A549 (cell line): ENCODE measurements at regions of chr11 and their contacts with region 1.

Region 1: DNA sequence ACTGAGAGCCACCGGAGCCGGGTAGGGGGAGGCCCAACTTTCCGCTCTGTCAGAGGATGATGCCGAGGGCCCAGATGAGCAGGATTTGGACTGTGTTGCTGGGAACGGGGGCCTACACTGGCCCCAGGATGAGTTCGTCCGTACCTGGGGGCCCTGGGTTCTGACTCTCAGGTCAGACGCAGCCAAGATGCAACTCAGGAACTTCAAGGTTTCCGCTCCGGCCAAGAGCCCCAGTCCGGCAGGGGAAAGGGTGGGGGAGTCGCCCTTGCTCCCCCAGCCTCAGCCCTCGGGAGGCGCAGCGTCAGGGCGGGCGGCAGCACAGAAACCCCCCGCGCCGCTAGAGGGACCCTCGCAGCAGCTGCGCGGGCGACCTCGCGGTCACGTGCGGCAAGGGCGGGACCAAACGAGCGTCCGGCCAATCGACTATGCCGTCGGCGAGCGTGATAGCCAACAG is 241 bp upstream of the ARL2 start:
- DNase-seq: peak in 1 of 2 experiments; percentile 94
- ATAC-seq: peak; percentile 90 to 92
- H3K4me3 ChIP-seq: peak overlapping the region; percentile 65
- H3K27ac ChIP-seq: peak overlapping the region; percentile 95 to 97
- H3K4me1 ChIP-seq: peaks cover 26% of the 10 kb centered on the region
- CTCF ChIP-seq: no peak; the same call in 1 of the 3 replicates
- EP300 ChIP-seq: no peak
- POLR2A ChIP-seq: peak; percentile 41
- RAD21 ChIP-seq: no peak; a peak in 2 of 5 replicates

Region 2: DNA sequence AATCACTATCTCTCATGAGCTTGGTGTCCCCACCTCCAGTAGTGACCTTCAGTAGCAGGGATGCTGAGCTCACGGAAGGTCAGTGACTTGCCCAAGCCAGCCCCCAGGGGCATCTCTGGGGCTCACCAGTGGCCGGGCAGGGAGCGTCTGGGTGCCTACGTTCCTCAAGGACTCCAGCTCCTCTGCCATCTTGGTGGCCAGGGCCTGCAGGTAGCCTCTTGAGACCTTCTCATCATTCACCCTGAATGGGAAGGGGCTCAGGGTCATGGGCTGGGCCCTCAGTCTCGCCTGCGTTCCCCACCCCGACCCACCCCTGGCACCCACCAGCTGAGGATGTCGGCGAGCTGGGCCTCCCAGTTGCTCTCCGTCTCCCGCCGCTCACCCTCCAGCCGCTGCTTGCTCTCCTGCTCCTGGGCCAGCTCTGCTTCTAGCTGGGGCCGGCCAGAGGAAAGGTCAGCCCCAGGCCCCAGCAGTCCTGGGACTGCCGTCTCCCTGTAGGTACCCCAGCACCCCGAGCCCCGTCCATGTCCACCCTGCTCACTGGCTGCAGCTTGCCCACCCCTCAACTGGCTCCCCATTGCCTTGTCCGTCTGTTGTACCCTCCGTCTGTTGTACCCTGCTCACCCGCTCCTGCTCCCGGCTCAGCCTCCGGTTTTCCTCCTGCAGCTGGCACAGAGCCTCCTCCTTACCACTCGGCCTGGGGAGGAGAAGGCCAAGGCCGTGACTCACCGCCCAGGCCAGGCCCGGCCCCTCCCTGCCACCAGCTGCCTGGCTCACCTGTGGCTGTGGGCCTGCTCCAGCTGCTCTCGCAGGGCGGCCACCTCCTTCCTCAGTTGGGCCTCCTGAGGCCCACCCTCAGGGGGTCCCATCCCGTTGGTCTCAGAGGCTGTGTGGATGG is 178.7 kb before region 1 on chr11:
- CTCF ChIA-PET with region 1: interaction called, 14 read pairs
- POLR2A ChIA-PET with region 1: interaction called, 3 read pairs
- DNase-seq: peak; percentile 53 to 58
- ATAC-seq: peak; percentile 62 to 83
- H3K4me3 ChIP-seq: no peak overlapping the region
- H3K27ac ChIP-seq: peak overlapping the region; percentile 60 to 68; a peak in 5 of 6 replicates
- H3K4me1 ChIP-seq: peaks cover 17% of the 10 kb centered on the region
- CTCF ChIP-seq: no peak
- EP300 ChIP-seq: no peak
- POLR2A ChIP-seq: no peak
- RAD21 ChIP-seq: no peak

Region 3: GRCh38 chr11:64878494-64879243 is 135.1 kb before region 1 on chr11 and contains the start of gene EHD1:
- CTCF ChIA-PET with region 1: interaction called, 10 read pairs
- POLR2A ChIA-PET with region 1: no interaction called
- DNase-seq: peak; percentile 97 to 98
- ATAC-seq: peak; percentile 77 to 89
- H3K4me3 ChIP-seq: peak within 1 kb of the TSS; percentile 90
- H3K27ac ChIP-seq: peak within 1 kb of the TSS; percentile 92 to 97
- H3K4me1 ChIP-seq: peaks cover 24% of the 10 kb centered on the region
- CTCF ChIP-seq: peak; percentile 69
- EP300 ChIP-seq: no peak
- POLR2A ChIP-seq: peak; percentile 95
- RAD21 ChIP-seq: peak; percentile 26 to 66; a peak in 4 of 5 replicates
- polyA plus RNA-seq, gene EHD1: 25.9 and 27.7 TPM in 2 replicates

Region 4: GRCh38 chr11:64916775-64917662 is 96.7 kb before region 1 on chr11 and contains the start of gene ATG2A:
- CTCF ChIA-PET with region 1: interaction called, 18 read pairs
- POLR2A ChIA-PET with region 1: no interaction called
- DNase-seq: peak; percentile 99
- ATAC-seq: peak; percentile 91 to 97
- H3K4me3 ChIP-seq: peak within 1 kb of the TSS; percentile 70
- H3K27ac ChIP-seq: peak within 1 kb of the TSS; percentile 77 to 91
- H3K4me1 ChIP-seq: peaks cover 15% of the 10 kb centered on the region
- CTCF ChIP-seq: no peak
- EP300 ChIP-seq: no peak
- POLR2A ChIP-seq: peak; percentile 79
- RAD21 ChIP-seq: no peak
- polyA plus RNA-seq, gene ATG2A: 3.1 and 4.0 TPM in 2 replicates

Region 5: DNA sequence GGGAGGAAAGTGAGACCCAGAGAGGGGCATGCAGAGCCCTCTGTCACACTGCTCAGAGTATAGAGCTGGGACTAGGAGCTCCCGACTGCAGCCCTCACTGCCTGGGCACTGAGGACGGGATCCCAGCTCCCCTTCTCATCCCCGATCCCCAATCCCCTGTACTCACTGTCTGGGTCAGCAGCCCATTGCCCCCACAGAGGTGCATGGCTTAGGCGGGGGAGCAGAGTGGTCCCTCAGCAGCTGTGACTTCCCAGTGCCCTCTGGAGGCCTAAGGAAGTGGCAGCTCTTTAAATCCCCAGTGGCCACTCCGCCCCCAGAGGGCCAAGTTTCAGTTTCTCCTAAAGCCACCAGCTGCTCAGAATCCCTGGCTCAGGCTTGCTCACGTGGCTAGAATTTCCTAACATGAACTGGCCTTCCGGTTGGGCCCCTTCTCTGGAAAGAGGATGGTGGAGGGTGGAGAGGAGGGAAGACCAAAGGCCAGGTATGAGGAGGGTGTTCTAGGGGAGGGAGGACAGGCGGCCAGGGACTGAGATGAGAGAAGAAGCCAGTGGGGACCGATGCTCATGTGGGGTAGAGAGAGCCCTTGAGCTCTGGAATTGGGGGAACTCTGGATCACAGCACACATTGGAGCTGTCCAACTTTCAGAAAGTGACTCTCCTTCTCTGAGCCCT is 16.9 kb before region 1 on chr11 and contains the start of gene BATF2:
- CTCF ChIA-PET with region 1: interaction called, 47 read pairs
- POLR2A ChIA-PET with region 1: interaction called, 3 read pairs
- DNase-seq: peak; percentile 76 to 89
- ATAC-seq: peak; percentile 90
- H3K4me3 ChIP-seq: no peak within 1 kb of the TSS
- H3K27ac ChIP-seq: peak within 1 kb of the TSS; percentile 56 to 73
- H3K4me1 ChIP-seq: peaks cover 29% of the 10 kb centered on the region
- CTCF ChIP-seq: peak; percentile 49; the same call in 2 of the 3 replicates
- EP300 ChIP-seq: no peak
- POLR2A ChIP-seq: no peak
- RAD21 ChIP-seq: peak; percentile 64 to 72
- polyA plus RNA-seq, gene BATF2: 0.67 and 0.79 TPM in 2 replicates

Region 6: DNA sequence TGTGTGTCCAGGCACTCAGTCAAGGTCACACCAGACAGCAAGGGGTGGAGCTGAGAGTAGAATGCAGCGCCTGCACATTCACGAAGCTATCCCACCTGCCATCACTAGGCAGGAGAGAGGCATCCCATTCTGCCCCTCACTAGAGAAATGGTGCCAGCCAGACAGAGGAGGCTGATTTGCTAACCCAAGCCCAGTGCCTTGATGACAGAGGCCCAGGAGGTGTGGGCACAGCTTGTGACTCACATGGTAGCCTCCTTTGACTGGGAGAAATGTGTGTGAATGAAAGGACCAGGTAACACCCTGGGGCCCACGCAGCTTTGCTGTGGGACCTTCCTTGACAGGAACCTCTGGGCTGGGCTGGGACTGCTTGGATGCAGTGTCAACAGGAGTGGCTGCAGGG is 49.8 kb after region 1 on chr11:
- CTCF ChIA-PET with region 1: interaction called, 16 read pairs
- POLR2A ChIA-PET with region 1: interaction called, 4 read pairs
- DNase-seq: no peak
- ATAC-seq: no peak; a peak in 1 of 6 replicates
- H3K4me3 ChIP-seq: no peak overlapping the region
- H3K27ac ChIP-seq: no peak overlapping the region
- H3K4me1 ChIP-seq: no peaks in the 10 kb centered on the region
- CTCF ChIP-seq: no peak
- EP300 ChIP-seq: no peak
- POLR2A ChIP-seq: no peak
- RAD21 ChIP-seq: no peak

Region 7: GRCh38 chr11:65213322-65214211 is 199.8 kb after region 1 on chr11:
- CTCF ChIA-PET with region 1: no interaction called
- POLR2A ChIA-PET with region 1: no interaction called
- DNase-seq: no peak
- ATAC-seq: peak in 1 of 2 experiments; percentile 32; a peak in 2 of 6 replicates
- H3K4me3 ChIP-seq: no peak overlapping the region
- H3K27ac ChIP-seq: no peak overlapping the region
- H3K4me1 ChIP-seq: no peaks in the 10 kb centered on the region
- CTCF ChIP-seq: no peak
- EP300 ChIP-seq: no peak
- POLR2A ChIP-seq: no peak
- RAD21 ChIP-seq: no peak